Endothelial cell of umbilical vein (primary cell): ENCODE measurements at regions of chr12 and their contacts with region 1.

Region 1: GRCh38 chr12:9813821-9814809 is 13.2 kb upstream of the KLRF1 start:
- DNase-seq: peak; percentile 74
- H3K4me3 ChIP-seq: peak overlapping the region in 2 of 3 experiments; percentile 3 to 28
- H3K27ac ChIP-seq: no peak overlapping the region
- H3K4me1 ChIP-seq: no peaks in the 10 kb centered on the region
- H3K27me3 ChIP-seq: peaks cover 0 to 7% of the 10 kb centered on the region in 2 experiments
- CTCF ChIP-seq: peak; percentile 93 to 99
- POLR2A ChIP-seq: no peak

Region 2: GRCh38 chr12:9404469-9405260 is 409.4 kb before region 1 on chr12:
- CTCF ChIA-PET with region 1: no interaction called
- POLR2A ChIA-PET with region 1: no interaction called
- dilution Hi-C with region 1: no loop called
- intact Hi-C with region 1: no loop called
- DNase-seq: no peak
- H3K4me3 ChIP-seq: no peak overlapping the region
- H3K27ac ChIP-seq: no peak overlapping the region
- H3K4me1 ChIP-seq: no peaks in the 10 kb centered on the region
- H3K27me3 ChIP-seq: no peaks in the 10 kb centered on the region
- CTCF ChIP-seq: no peak
- POLR2A ChIP-seq: no peak

Region 3: GRCh38 chr12:9829990-9830389 is 15.9 kb after region 1 on chr12:
- CTCF ChIA-PET with region 1: interaction called, 10 read pairs
- POLR2A ChIA-PET with region 1: no interaction called
- dilution Hi-C with region 1: no loop called
- intact Hi-C with region 1: no loop called
- DNase-seq: no peak
- H3K4me3 ChIP-seq: no peak overlapping the region
- H3K27ac ChIP-seq: no peak overlapping the region
- H3K4me1 ChIP-seq: no peaks in the 10 kb centered on the region
- H3K27me3 ChIP-seq: peaks cover 0 to 3% of the 10 kb centered on the region in 2 experiments
- CTCF ChIP-seq: no peak
- POLR2A ChIP-seq: no peak

Region 4: GRCh38 chr12:9925708-9926393 is 111.7 kb after region 1 on chr12:
- CTCF ChIA-PET with region 1: interaction called, 74 read pairs
- POLR2A ChIA-PET with region 1: no interaction called
- dilution Hi-C with region 1: no loop called
- intact Hi-C with region 1: loop called (anchors 1 kb)
- DNase-seq: peak; percentile 60
- H3K4me3 ChIP-seq: no peak overlapping the region
- H3K27ac ChIP-seq: no peak overlapping the region
- H3K4me1 ChIP-seq: no peaks in the 10 kb centered on the region
- H3K27me3 ChIP-seq: peaks cover 0 to 2% of the 10 kb centered on the region in 2 experiments
- CTCF ChIP-seq: peak; percentile 31 to 39
- POLR2A ChIP-seq: no peak

Region 5: DNA sequence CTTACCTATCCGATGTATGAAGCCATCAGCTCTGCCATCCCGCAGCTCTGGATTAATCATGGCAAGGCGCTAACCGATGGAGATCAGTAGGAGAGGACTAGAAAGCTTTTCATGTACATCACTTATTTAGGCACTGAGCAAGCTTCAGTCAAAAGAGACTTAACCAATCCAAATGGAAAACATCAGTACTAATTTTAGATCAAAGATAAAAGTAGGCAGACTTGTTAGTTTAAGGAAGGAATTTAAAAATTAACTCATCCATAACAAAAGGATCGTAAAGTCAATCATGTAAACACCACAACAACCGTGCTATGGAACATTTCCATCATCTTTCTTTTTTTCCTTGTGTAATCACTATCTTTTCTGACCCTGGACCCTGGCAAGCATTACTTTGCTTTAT is 118.2 kb after region 1 on chr12 and contains the start of gene CLEC2A:
- CTCF ChIA-PET with region 1: interaction called, 74 read pairs
- POLR2A ChIA-PET with region 1: no interaction called
- dilution Hi-C with region 1: no loop called
- intact Hi-C with region 1: no loop called
- DNase-seq: no peak
- H3K4me3 ChIP-seq: no peak within 1 kb of the TSS
- H3K27ac ChIP-seq: no peak within 1 kb of the TSS
- H3K4me1 ChIP-seq: no peaks in the 10 kb centered on the region
- H3K27me3 ChIP-seq: no peaks in the 10 kb centered on the region
- CTCF ChIP-seq: no peak
- POLR2A ChIP-seq: no peak
- total RNA-seq, gene CLEC2A: not detected in 2 replicates

Region 6: DNA sequence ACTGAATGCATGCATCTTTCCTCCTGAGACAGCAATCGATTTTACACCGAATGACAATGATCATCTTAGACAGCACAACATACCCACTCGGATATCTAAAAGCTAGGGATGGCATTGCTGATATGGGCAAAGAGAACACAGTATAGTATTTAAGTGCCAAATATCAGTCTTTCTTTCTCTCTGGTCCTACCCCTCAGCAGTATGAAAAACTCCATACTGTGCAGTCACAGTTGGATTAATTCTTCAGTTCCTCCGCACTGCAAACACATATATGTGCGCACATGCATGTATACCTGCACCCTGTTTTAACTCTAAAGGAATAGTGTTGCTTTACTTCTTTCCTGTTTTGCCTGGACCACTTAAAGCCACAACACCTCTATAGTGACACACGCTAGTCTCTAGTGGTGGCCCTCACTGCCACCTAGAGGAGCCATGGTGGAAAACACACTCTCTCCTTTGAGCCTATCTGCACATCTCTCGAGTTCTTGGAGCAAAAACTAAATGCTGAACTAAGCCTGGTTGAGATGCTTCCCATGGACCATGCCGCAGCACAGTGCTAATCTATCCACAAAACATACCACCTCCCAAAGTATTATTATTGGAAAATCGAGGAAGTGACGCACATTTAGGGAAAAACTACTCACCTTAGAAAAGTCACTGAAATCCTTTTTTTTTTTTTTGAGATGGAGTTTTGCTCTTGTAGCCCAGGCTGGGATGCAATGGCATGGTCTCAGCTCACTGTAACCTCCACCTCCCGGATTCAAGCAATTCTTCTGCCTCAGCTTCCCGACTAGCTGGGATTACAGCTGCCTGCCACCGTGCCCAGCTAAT is 376.7 kb after region 1 on chr12:
- CTCF ChIA-PET with region 1: no interaction called
- POLR2A ChIA-PET with region 1: no interaction called
- dilution Hi-C with region 1: no loop called
- intact Hi-C with region 1: loop called (anchors 1 kb)
- DNase-seq: peak; percentile 74
- H3K4me3 ChIP-seq: no peak overlapping the region
- H3K27ac ChIP-seq: no peak overlapping the region
- H3K4me1 ChIP-seq: no peaks in the 10 kb centered on the region
- H3K27me3 ChIP-seq: peaks cover 3% of the 10 kb centered on the region in 2 experiments
- CTCF ChIP-seq: peak; percentile 68 to 77
- POLR2A ChIP-seq: no peak